ENCODE measurements at regions of chr6 and their contacts with region 1.

Region 1: DNA sequence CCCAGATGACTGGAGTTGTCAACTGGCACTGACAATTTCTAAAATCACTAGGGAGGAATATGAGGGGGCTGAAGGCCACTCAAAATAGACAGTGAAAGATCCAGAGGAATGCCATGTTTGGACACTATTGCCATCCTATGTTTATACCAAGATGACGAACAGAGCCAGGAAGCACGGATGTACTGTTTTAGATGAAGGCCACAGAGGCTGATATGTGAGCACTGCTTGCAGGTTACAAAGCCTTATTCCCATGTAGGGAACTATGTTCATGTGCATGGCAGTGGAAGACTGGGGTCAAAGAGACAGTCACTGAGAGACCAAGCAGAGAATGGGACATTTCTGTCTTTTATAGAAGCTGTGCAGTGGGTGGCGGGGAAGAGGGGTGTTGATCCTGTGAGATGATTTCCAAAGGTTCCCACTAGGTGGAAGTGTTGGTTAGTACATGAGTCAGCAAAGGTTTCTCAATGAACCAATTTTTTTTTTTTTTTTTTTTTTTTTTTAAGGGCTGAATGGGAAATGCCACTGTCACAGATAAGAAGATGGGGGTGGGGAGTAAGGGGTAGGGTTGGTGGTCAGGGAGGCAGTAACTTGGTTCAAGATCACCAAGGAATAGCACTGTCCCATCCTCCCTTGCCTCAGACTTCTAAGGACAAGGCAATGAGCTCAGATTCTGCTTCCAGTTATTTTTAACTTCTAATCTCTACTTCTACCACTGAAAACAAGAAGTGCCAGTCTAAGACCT is 46.7 kb upstream of the MOCS1 start:
- DNase-seq: no peak
- ATAC-seq: peak; percentile 69

Region 2: DNA sequence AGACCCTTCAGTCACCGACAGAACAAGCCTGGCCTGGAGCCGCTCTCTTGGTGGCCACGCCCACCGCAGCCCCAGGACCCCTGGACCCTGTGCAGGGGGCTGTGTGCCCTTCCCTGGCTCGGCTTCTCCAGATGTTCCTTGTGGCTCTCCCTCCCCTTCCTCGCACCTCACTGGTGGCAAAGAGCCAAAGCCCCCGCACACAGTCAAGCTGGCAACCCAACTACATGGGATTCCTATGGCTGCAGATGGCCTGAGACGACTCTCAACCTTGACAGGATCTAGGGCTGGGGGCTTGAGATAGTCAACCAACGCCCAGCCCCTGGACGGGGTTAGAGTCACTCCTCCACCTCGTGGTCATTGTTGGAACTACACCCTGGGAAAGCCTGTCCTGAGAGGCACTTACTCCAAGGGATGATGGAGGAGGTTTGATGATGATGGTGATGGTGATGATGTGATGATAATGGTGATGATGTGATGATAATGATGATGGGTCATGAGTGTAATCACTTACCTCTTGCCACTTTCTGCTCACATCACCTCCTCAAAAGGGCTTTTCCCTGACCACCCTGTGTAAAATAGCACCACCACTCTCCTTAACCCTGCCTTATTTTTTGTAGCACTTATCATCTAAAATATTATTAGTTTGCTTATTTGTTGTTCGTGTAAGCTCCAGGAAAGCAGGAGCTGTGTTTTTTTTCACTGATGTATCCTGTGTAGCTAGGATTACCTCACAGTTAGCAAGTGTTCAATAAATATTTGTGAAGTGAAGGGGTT is 327.7 kb after region 1 on chr6:
- intact Hi-C with region 1: loop called (anchors 2 kb)
- DNase-seq: no peak
- ATAC-seq: peak; percentile 43

Region 3: DNA sequence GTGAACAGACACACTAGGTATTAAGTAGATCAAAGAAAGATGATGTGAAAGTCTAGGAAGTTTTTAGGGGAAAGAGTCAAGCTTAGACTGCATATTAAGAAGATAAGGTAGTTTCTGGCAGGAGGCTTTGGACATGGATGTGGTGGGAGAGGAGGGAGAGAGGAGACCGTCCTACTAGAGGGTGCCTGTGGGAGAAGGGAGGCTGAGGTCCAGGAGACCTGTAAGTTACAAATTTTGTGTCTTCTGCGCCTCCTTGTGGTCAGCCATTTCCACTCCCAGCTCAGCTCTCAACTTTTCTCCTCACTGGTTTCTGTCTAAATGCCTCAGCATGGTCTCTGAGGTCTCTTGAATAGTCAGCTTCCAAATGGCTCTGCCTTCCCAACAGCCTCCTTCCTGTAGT is 864.5 kb after region 1 on chr6:
- intact Hi-C with region 1: loop called (anchors 1 kb)
- DNase-seq: no peak
- ATAC-seq: no peak

Region 4: DNA sequence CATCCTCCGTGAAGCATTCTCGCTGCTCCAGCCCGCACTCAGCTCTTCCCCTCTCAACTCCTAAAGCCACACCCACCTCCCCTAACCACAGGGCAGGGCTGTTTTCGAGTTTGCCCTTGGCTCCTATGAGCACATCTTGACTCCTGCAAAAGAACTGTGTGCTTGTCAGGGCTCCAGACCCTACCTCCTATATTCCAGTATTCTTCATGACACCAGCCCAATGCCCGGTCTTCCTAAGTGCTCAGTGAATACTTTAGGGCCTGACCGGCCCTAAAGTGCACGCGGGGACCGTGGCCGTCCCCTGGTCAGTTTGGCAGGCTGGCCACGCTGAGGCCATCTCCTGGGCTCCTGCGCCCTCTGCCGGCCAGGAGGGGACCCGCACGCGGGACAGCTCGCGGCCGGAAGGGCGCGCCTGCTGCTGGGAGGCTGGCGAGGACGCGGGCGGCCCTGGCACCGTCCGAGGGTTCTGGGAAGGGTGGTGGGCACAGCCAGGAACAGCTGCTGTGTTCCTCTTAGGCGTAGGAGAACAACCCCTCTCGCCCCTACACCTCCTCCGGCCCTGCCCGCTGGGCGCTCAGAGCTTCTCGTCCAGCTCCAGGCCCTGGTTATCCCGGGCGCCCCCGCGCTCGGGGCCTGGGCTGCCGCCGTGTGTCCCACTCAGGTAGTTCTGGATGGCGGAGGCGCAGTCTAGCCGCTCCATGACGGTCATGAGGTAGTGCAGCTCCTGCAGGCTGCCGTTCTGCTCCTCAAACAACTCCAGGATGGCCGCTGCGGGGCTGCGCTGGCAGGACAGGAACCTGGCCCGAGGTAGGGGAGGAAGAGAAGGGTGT is 1047.0 kb after region 1 on chr6:
- intact Hi-C with region 1: loop called (anchors 2 kb)
- DNase-seq: peak; percentile 94
- ATAC-seq: peak; percentile 93